Naive thymus-derived CD4-positive, alpha-beta T cell (primary cell): ENCODE measurements at regions of chr19 and their contacts with region 1.

Region 1: DNA sequence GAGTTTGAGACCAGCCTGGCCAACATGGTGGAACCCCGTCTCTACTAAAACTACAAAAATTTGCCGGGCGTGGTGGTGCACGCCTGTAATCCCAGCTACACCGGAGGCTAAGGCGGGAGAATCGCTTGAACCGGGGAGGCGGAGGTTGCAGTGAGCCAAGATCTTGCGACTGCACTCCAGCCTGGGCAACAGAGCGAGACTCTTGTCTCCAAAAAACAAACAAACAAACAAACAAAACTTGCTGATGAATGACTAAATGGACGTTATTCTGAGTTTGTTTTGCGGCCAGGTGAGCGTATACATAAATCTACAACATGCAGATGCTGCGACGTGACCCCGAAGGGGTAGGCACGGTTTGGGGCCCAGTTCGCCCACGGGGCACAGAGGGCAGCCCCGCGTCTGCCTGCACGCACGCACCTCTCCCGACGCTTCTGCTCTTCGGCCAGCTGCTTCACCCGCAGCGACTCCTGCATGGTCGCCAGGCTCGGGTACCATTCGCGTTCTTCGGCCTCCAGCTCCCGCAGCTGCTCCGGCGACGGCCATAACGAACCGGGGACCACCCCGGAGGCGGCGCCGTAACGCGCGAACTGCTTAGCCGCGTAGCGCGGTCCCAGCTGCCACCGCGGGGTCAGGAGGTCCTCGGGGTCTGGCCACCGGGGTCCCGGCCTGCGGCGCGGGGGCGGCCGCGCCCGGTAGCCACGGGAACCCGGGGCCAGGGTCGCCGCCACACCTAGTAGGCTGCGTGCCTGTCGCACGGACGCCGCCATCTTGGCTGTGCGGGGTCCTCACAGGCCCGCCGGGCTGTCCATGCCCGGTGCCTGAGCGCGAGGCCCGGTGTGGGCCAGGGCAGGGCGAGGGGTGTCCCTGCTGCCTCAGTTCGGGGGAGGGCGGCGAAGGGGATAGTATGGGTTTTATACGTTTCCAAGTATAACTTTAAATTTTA is at the start of gene GADD45GIP1:
- DNase-seq: peak; percentile 68 to 84 (median 80)
- ATAC-seq: peak; percentile 99
- H3K4me3 ChIP-seq: peak within 1 kb of the TSS; percentile 84
- H3K4me3 Mint-ChIP-seq: peak within 1 kb of the TSS; percentile 81 to 93 (median 88)
- H3K27ac ChIP-seq: peak within 1 kb of the TSS; percentile 81
- H3K27ac Mint-ChIP-seq: peak within 1 kb of the TSS; percentile 78 to 94 (median 91)
- H3K4me1 ChIP-seq: peaks cover 0 to 11% of the 10 kb centered on the region in 2 donors
- H3K4me1 Mint-ChIP-seq: peaks cover 16 to 29% (median 22%) of the 10 kb centered on the region in 7 donors
- H3K27me3 ChIP-seq: no peaks in the 10 kb centered on the region
- H3K27me3 Mint-ChIP-seq: no peaks in the 10 kb centered on the region
- total RNA-seq, gene GADD45GIP1: 8.5 to 17.0 (median 13.8) TPM

Region 2: DNA sequence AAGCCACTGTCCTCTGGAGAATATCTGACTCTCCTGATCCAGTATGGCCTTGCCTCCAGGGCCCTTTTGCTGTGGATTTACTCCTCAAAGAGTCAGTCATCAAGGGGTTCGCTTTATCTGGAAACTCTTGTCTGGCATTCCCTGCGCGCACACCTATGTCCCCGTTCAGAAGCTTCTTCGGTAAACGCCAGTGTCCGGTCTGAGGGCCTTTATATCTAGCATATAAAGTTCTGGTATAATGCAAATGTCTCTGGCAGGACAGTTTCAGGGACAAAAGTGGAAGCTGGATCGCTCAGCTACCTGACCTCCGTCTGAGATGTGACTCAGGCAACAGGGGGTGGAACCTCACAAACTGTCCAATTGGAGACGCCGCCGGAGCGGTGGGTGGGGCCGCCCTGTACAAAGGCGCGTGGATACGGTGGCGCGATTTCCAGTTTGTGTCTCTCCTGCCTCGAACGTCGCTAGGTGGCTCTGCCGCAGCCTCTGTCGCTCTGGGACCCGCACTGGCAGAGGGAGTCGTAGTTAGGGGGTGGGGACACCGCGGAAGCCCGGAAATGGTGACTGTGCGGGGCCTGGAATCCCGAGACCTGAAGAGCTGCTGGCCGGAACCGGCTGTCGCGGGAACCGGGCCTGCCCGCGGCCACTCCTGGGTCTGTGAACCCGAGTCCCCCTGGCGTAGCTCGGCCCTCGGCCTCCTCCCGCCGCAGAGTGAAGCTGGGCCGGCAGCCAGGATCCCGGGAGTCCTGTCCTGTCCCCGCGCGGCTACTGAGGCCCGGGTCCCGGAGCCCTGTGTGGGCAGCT is 461.5 kb before region 1 on chr19:
- CTCF ChIA-PET with region 1: no interaction called
- POLR2A ChIA-PET with region 1: no interaction called
- intact Hi-C with region 1: no loop called
- DNase-seq: peak; percentile 76 to 94 (median 91)
- ATAC-seq: peak; percentile 100
- H3K4me3 ChIP-seq: peak overlapping the region; percentile 80
- H3K4me3 Mint-ChIP-seq: peak overlapping the region; percentile 84 to 95 (median 91)
- H3K27ac ChIP-seq: peak overlapping the region; percentile 72
- H3K27ac Mint-ChIP-seq: peak overlapping the region; percentile 84 to 98 (median 91)
- H3K4me1 ChIP-seq: peaks cover 9 to 11% of the 10 kb centered on the region in 2 donors
- H3K4me1 Mint-ChIP-seq: peaks cover 0 to 16% (median 13%) of the 10 kb centered on the region in 7 donors
- H3K27me3 ChIP-seq: no peaks in the 10 kb centered on the region
- H3K27me3 Mint-ChIP-seq: no peaks in the 10 kb centered on the region

Region 3: GRCh38 chr19:12918271-12918670 is 38.4 kb before region 1 on chr19:
- CTCF ChIA-PET with region 1: interaction called, 3 read pairs
- POLR2A ChIA-PET with region 1: interaction called, 3 read pairs
- intact Hi-C with region 1: loop called (anchors 2 kb)
- DNase-seq: no peak
- ATAC-seq: no peak
- H3K4me3 ChIP-seq: no peak overlapping the region
- H3K4me3 Mint-ChIP-seq: peak overlapping the region in 9 of 10 donors; percentile 23 to 87 (median 76)
- H3K27ac ChIP-seq: no peak overlapping the region
- H3K27ac Mint-ChIP-seq: peak overlapping the region in 6 of 9 donors; percentile 48 to 96 (median 91)
- H3K4me1 ChIP-seq: peaks cover 12 to 27% of the 10 kb centered on the region in 2 donors
- H3K4me1 Mint-ChIP-seq: peaks cover 9 to 51% (median 34%) of the 10 kb centered on the region in 7 donors
- H3K27me3 ChIP-seq: no peaks in the 10 kb centered on the region
- H3K27me3 Mint-ChIP-seq: no peaks in the 10 kb centered on the region

Region 4: GRCh38 chr19:12945479-12946091 is 11.1 kb before region 1 on chr19 and contains the start of gene RAD23A:
- CTCF ChIA-PET with region 1: interaction called, 3 read pairs
- POLR2A ChIA-PET with region 1: interaction called, 13 read pairs
- intact Hi-C with region 1: loop called (anchors 1 kb)
- DNase-seq: peak; percentile 96 to 99 (median 97)
- ATAC-seq: peak; percentile 94
- H3K4me3 ChIP-seq: peak within 1 kb of the TSS; percentile 67
- H3K4me3 Mint-ChIP-seq: peak within 1 kb of the TSS; percentile 88 to 97 (median 92)
- H3K27ac ChIP-seq: peak within 1 kb of the TSS; percentile 86
- H3K27ac Mint-ChIP-seq: peak within 1 kb of the TSS; percentile 93 to 99 (median 97)
- H3K4me1 ChIP-seq: peaks cover 21 to 26% of the 10 kb centered on the region in 2 donors
- H3K4me1 Mint-ChIP-seq: peaks cover 24 to 61% (median 46%) of the 10 kb centered on the region in 7 donors
- H3K27me3 ChIP-seq: no peaks in the 10 kb centered on the region
- H3K27me3 Mint-ChIP-seq: peaks cover 0 to 3% (median 0%) of the 10 kb centered on the region in 5 donors
- total RNA-seq, gene RAD23A: 75.0 to 111 (median 96.4) TPM